GM13977 (cell line): ENCODE measurements at regions of chr20 and their contacts with region 1.

Region 1: DNA sequence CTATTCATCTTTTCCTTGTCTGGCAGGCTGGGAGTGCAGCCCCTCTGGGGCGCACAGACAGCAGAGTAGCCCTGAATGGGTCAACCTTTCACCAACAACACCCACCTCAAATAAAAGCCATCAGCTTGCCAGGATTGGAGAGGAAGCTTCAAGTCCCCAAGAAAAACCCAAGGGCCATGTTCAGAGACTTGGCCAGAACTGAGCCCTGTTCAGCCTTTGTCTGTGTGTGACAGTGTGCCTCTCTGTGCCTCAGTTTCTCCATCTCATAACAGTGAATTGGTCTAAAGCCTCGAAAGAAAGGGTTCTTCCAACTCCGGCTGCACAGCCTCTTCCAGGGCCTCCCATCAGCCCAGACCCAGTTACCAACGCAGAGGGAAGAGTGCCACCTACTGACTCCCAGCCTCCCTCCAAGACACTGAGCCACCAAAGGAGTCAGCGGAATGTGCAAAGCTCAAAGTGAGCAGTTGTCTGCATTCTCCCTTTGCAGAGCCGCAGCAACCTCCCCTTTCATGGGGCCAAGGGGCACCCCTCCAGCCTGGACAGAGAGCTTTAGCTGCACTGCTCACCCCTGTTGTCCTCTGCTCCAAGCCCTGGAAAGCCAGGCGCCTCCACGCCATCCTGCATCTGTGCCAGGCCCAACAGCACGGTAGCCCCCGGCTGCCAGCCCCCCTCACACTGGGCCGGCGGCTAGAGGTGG is 82.7 kb upstream of the TOP1 start:
- DNase-seq: peak; percentile 36
- CTCF ChIP-seq: peak; percentile 57

Region 2: GRCh38 chr20:40741507-40742106 is 204.3 kb before region 1 on chr20:
- in situ Hi-C with region 1: loop called (anchors 25 kb)
- DNase-seq: peak; percentile 58
- CTCF ChIP-seq: peak; percentile 68